Dendritic cell treated with granulocyte-macrophage colony-stimulating factor and Interleukin-4, amounts not matched to agents 40 ng/mL and 50 ng/mL, for 4 days (primary cell): ENCODE measurements at regions of chr2 and their contacts with region 1.

Region 1: DNA sequence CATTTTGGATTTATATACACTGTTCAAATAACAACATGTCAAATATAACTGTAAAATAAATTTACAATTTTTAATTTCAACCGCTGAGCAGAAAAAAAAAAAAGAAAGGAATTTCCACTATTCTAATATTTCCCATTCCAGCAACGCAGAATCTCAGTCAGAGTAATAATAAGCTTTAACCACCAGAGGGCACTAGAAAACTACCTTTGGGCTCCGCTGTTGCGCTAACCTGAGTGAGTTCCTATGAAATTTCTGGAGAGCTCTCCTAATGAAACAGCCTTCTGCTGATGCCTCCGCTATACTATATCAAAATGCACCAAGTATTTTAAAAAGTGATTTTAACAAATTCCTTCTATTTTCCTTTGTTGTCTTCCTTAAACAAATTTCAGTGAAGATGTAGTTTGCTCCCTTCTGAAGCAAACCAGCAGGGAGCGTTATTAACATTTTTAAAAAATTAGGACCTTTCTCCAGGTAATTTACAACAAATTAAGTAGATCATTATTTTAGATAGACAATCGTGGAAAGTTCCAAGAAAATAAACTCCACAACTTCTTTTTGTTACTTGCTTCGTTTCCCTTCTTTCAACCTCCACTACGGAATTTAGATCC is 23.0 kb downstream of the ERMN start:
- H3K4me3 Mint-ChIP-seq: no peak overlapping the region
- H3K27ac Mint-ChIP-seq: no peak overlapping the region
- H3K4me1 Mint-ChIP-seq: peaks cover 5% of the 10 kb centered on the region
- H3K27me3 Mint-ChIP-seq: peaks cover 5% of the 10 kb centered on the region

Region 2: GRCh38 chr2:157024129-157024528 is 278.5 kb before region 1 on chr2:
- intact Hi-C with region 1: no loop called
- H3K4me3 Mint-ChIP-seq: no peak overlapping the region
- H3K27ac Mint-ChIP-seq: no peak overlapping the region
- H3K4me1 Mint-ChIP-seq: no peaks in the 10 kb centered on the region
- H3K27me3 Mint-ChIP-seq: no peaks in the 10 kb centered on the region

Region 3: DNA sequence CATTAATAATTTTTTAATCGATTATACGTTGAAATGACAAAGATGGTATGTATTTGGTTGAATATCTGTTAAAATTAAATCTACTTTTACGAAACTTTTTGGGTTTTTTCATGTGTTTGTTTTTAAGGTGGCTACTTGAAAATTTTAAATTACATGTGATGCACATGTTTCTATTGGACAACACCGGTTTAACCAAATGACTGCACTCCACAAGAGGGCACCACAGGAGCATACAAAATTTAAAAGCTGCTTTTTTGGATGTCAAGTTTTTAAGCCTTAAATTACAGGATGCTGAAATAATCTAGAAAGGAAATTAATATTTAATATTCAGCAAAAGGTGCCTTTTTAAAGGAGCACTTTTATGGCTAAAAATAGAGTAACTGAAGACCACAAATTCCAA is 474.8 kb after region 1 on chr2:
- intact Hi-C with region 1: loop called (anchors 10 kb)
- H3K4me3 Mint-ChIP-seq: no peak overlapping the region
- H3K27ac Mint-ChIP-seq: no peak overlapping the region
- H3K4me1 Mint-ChIP-seq: no peaks in the 10 kb centered on the region
- H3K27me3 Mint-ChIP-seq: no peaks in the 10 kb centered on the region